ENCODE measurements at regions of chr2 and their contacts with region 1.

Region 1: GRCh38 chr2:47070920-47071824 is 83.9 kb downstream of the STPG4 start:
- DNase-seq: no peak
- ATAC-seq: peak; percentile 16
- H3K4me3 Mint-ChIP-seq: peak overlapping the region; percentile 59
- H3K27ac Mint-ChIP-seq: peak overlapping the region; percentile 96
- H3K4me1 Mint-ChIP-seq: peaks cover 64% of the 10 kb centered on the region
- H3K27me3 Mint-ChIP-seq: no peaks in the 10 kb centered on the region
- CTCF ChIP-seq: no peak

Region 2: DNA sequence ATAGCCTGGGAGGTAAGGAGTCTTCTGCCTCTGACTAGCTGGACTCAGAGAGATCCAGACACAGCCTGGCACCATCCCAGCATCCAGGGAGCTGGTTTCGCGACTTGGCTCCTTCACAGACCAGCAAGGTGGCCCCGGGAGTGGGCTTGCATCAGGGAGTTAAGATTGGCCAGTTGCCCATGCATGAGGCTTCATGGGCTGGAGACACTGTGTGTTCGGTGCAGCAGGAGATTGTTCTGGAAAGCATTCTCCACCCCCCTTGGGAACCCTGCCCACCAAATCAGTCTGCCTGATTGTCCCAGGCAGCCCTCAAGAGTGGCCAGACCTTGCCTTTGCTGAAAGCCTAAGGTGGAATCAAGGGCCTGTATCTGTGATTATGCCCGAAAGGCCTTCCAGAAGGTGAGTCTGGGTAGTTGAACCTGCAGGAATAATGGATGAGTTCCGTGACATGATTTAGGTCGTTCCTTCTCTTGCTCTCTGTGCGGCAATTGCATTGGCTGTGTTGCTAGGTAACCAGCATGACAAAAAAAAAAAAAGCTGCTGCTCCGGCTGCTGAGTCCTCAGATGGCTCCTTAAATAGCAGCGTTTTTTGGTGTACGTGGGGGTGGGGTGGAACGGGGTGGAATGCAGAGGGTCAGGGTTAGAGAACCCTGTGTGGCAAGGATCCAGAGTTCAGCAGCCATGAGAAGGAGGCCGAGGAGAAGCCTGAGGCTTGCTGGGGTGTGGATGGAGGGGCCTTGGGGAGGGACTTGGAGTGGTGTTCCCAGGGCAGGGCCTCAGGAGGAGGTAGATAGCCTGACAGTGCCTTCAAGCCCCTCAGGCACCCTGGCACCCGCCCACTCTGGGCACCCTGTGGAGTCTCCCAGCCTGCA is 62.6 kb before region 1 on chr2:
- CTCF ChIA-PET with region 1: no interaction called
- POLR2A ChIA-PET with region 1: no interaction called
- intact Hi-C with region 1: no loop called
- DNase-seq: no peak
- ATAC-seq: no peak
- H3K4me3 Mint-ChIP-seq: no peak overlapping the region
- H3K27ac Mint-ChIP-seq: no peak overlapping the region
- H3K4me1 Mint-ChIP-seq: no peaks in the 10 kb centered on the region
- H3K27me3 Mint-ChIP-seq: no peaks in the 10 kb centered on the region
- CTCF ChIP-seq: no peak

Region 3: GRCh38 chr2:47086054-47086471 is 14.9 kb after region 1 on chr2:
- CTCF ChIA-PET with region 1: no interaction called
- POLR2A ChIA-PET with region 1: no interaction called
- intact Hi-C with region 1: loop called (anchors 2 kb)
- DNase-seq: no peak
- ATAC-seq: no peak
- H3K4me3 Mint-ChIP-seq: no peak overlapping the region
- H3K27ac Mint-ChIP-seq: no peak overlapping the region
- H3K4me1 Mint-ChIP-seq: peaks cover 25% of the 10 kb centered on the region
- H3K27me3 Mint-ChIP-seq: no peaks in the 10 kb centered on the region
- CTCF ChIP-seq: no peak

Region 4: DNA sequence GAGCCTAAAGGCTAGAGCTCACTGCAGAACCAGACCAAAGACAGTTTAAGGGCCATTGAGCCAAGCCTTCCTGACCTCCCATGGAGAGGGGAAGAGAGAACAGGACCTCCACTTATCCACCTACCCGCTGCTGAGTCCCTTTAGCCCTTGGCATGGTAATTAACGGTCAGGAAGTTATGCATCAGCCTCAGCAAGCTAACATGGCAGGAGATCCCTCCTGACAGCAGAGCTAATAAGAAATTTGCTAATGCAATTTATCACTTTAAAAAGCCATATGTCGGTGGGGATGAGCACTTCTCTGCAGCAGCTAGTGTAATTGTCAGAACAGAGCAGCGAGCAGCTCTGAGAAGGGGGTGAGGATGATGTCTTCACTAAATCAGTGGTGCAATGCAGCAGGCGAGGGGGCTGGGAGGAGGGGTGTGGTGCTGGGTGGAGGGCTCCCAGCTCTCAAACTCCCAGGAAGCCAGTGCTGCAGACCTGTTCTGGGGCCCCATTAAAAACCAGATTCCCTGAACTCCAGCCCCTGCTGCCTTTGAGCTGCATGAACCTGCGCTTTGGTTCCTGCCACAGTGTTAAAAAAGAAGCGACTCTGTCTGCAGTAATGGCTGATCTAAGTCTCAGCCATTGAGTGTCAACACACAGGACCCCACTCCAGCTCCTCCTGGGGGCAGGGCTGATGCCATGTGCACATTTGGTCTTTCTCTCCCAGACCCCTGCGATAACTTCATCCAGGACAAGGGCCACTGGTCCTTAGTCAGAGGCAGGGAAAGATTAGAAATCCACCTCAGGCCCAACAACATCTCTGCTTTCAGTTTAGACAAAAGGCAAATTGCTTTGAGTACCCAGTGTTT is 168.2 kb after region 1 on chr2:
- CTCF ChIA-PET with region 1: no interaction called
- POLR2A ChIA-PET with region 1: interaction called, 11 read pairs
- intact Hi-C with region 1: no loop called
- DNase-seq: no peak
- ATAC-seq: no peak
- H3K4me3 Mint-ChIP-seq: no peak overlapping the region
- H3K27ac Mint-ChIP-seq: no peak overlapping the region
- H3K4me1 Mint-ChIP-seq: no peaks in the 10 kb centered on the region
- H3K27me3 Mint-ChIP-seq: no peaks in the 10 kb centered on the region
- CTCF ChIP-seq: no peak